Endothelial cell of umbilical vein (primary cell): ENCODE measurements at regions of chr3 and their contacts with region 1.

Region 1: GRCh38 chr3:186849374-186849975 is 7.0 kb downstream of the ADIPOQ start:
- DNase-seq: peak; percentile 74
- H3K4me3 ChIP-seq: no peak overlapping the region
- H3K27ac ChIP-seq: no peak overlapping the region
- H3K4me1 ChIP-seq: no peaks in the 10 kb centered on the region
- H3K27me3 ChIP-seq: no peaks in the 10 kb centered on the region
- CTCF ChIP-seq: peak; percentile 3 to 20
- POLR2A ChIP-seq: no peak

Region 2: GRCh38 chr3:186694288-186695032 is 155.0 kb before region 1 on chr3:
- CTCF ChIA-PET with region 1: no interaction called
- POLR2A ChIA-PET with region 1: no interaction called
- dilution Hi-C with region 1: no loop called
- intact Hi-C with region 1: no loop called
- DNase-seq: no peak
- H3K4me3 ChIP-seq: no peak overlapping the region
- H3K27ac ChIP-seq: no peak overlapping the region
- H3K4me1 ChIP-seq: no peaks in the 10 kb centered on the region
- H3K27me3 ChIP-seq: no peaks in the 10 kb centered on the region
- CTCF ChIP-seq: no peak
- POLR2A ChIP-seq: no peak

Region 3: GRCh38 chr3:186821429-186822367 is 27.8 kb before region 1 on chr3:
- CTCF ChIA-PET with region 1: interaction called, 10 read pairs
- POLR2A ChIA-PET with region 1: no interaction called
- dilution Hi-C with region 1: no loop called
- intact Hi-C with region 1: no loop called
- DNase-seq: peak; percentile 61
- H3K4me3 ChIP-seq: peak overlapping the region in 2 of 3 experiments; percentile 21 to 58
- H3K27ac ChIP-seq: no peak overlapping the region
- H3K4me1 ChIP-seq: peaks cover 9% of the 10 kb centered on the region
- H3K27me3 ChIP-seq: no peaks in the 10 kb centered on the region
- CTCF ChIP-seq: peak; percentile 52 to 63
- POLR2A ChIP-seq: no peak

Region 4: DNA sequence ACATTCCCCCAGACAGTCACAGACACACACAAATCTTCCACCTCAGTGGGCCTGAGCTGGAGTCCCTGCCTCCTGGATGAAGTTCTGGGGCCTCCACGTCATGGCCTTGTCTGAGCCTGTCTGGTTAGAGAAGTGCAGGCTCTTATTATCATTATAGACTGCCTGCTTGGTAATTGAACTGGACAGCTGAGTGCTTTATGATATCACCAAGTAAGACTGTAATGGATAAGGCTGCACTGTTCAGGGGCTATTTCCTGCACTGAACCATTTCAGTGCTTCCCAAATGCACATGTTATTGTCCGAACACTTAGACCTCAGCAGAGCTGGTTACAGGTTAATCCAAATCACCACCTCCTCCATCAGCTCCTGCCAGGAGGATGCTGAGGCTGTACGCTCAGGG is 72.1 kb after region 1 on chr3:
- CTCF ChIA-PET with region 1: interaction called, 21 read pairs
- POLR2A ChIA-PET with region 1: no interaction called
- dilution Hi-C with region 1: no loop called
- intact Hi-C with region 1: no loop called
- DNase-seq: no peak
- H3K4me3 ChIP-seq: no peak overlapping the region
- H3K27ac ChIP-seq: no peak overlapping the region
- H3K4me1 ChIP-seq: peaks cover 5% of the 10 kb centered on the region
- H3K27me3 ChIP-seq: no peaks in the 10 kb centered on the region
- CTCF ChIP-seq: no peak
- POLR2A ChIP-seq: no peak

Region 5: DNA sequence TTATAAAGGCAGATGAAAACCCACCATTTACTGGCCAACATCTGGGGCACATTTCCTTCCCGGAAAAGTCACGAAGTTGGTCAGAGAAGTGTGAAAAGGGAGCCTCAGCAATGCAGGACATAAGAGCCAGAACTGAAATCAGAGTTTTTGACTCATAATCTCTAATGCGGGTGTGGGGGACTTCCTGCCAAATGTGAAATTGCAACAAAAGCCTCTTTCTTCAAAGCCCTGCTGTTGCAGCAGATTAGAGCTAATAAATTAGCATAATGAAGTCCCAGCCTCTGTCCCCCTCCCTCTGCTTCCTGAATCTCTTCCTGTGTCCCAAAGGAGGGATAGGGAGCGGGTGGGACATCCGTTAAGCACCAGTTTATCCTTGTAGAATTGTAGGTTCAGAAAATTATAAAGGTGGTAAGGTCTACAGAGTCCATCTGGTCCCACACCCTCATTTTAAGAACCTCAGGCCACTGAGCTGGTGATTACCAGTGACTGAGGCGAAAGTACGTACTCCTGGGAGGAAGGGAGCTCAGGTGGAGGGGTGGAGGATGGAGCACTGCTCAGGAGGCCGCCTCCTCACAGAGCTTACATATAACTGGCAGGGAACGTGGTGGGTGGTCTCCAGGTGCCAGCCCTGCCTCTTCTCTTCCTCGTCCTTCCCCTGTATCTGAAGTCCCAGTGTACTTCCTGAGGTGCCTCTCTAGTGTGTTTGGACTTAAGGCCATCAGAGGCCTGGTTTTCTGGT is 115.8 kb after region 1 on chr3:
- CTCF ChIA-PET with region 1: interaction called, 18 read pairs
- POLR2A ChIA-PET with region 1: interaction called, 3 read pairs
- dilution Hi-C with region 1: no loop called
- intact Hi-C with region 1: no loop called
- DNase-seq: peak; percentile 46
- H3K4me3 ChIP-seq: no peak overlapping the region
- H3K27ac ChIP-seq: no peak overlapping the region
- H3K4me1 ChIP-seq: peaks cover 22% of the 10 kb centered on the region
- H3K27me3 ChIP-seq: no peaks in the 10 kb centered on the region
- CTCF ChIP-seq: no peak
- POLR2A ChIP-seq: no peak

Region 6: GRCh38 chr3:187066228-187066995 is 216.9 kb after region 1 on chr3:
- CTCF ChIA-PET with region 1: interaction called, 12 read pairs
- POLR2A ChIA-PET with region 1: no interaction called
- dilution Hi-C with region 1: no loop called
- intact Hi-C with region 1: no loop called
- DNase-seq: peak; percentile 49
- H3K4me3 ChIP-seq: no peak overlapping the region
- H3K27ac ChIP-seq: no peak overlapping the region
- H3K4me1 ChIP-seq: no peaks in the 10 kb centered on the region
- H3K27me3 ChIP-seq: no peaks in the 10 kb centered on the region
- CTCF ChIP-seq: peak; percentile 17 to 25
- POLR2A ChIP-seq: no peak

Region 7: DNA sequence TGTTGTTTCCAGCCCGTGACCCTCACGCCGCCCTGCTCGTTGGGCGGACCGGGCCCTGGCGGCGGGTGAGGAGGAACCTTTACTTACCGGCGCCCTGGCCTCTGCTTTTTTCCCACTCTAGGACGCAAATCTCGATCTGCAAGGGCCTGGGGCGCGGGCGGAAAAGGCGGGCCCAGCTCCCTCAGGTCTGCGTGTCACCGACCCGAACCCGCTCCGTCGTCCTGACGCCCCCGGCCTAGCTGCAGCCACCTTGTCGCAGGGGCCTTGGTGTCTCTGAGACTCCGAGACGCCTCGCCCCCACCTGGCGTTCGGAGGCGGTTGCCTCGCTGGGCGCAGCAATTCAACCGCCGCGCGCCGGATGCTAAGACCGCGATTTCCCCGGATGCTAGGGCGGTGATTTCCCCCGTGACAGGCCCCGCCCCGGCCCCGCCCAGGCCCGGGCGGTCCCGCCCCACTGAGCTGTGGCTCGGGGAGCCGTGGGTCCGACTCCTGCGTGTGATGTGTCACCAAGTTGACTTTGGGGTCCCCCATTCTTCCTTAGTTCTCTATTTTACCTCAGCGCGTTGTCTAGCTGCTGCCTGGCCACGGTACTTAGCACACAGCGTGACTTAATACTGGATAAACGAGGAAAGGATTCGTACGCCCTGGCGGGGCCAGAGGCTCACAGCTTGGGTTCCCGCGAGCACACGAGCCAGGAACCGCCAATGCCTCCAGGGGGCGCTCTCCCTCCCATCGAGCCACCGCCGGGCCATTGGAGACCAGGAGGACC is 289.8 kb after region 1 on chr3 and contains the start of gene RPL39L:
- CTCF ChIA-PET with region 1: interaction called, 15 read pairs
- POLR2A ChIA-PET with region 1: no interaction called
- dilution Hi-C with region 1: no loop called
- intact Hi-C with region 1: loop called (anchors 1 kb)
- DNase-seq: peak; percentile 87
- H3K4me3 ChIP-seq: peak within 1 kb of the TSS; percentile 44 to 67 (median 54)
- H3K27ac ChIP-seq: peak within 1 kb of the TSS; percentile 55
- H3K4me1 ChIP-seq: peaks cover 4% of the 10 kb centered on the region
- H3K27me3 ChIP-seq: peaks cover 0 to 6% of the 10 kb centered on the region in 2 experiments
- CTCF ChIP-seq: peak; percentile 95 to 97
- POLR2A ChIP-seq: peak; percentile 83
- total RNA-seq, gene RPL39L: 16.8 and 22.3 TPM in 2 replicates